Mammary epithelial cell (primary cell): ENCODE measurements at regions of chr19 and their contacts with region 1.

Region 1: GRCh38 chr19:31432201-31432810 is 83.1 kb upstream of the TSHZ3 start:
- DNase-seq: no peak
- H3K4me3 ChIP-seq: no peak overlapping the region
- H3K27ac ChIP-seq: no peak overlapping the region
- H3K4me1 ChIP-seq: no peaks in the 10 kb centered on the region
- H3K27me3 ChIP-seq: no peaks in the 10 kb centered on the region
- CTCF ChIP-seq: no peak

Region 2: GRCh38 chr19:31364963-31365362 is 67.3 kb before region 1 on chr19:
- CTCF ChIA-PET with region 1: no interaction called
- dilution Hi-C with region 1: no loop called
- in situ Hi-C with region 1: no loop called
- intact Hi-C with region 1: no loop called
- DNase-seq: no peak
- H3K4me3 ChIP-seq: no peak overlapping the region
- H3K27ac ChIP-seq: no peak overlapping the region
- H3K4me1 ChIP-seq: no peaks in the 10 kb centered on the region
- H3K27me3 ChIP-seq: no peaks in the 10 kb centered on the region
- CTCF ChIP-seq: no peak

Region 3: GRCh38 chr19:31397308-31397707 is 35.0 kb before region 1 on chr19:
- CTCF ChIA-PET with region 1: no interaction called
- dilution Hi-C with region 1: loop called (anchors 5 kb)
- in situ Hi-C with region 1: no loop called
- intact Hi-C with region 1: no loop called
- DNase-seq: no peak
- H3K4me3 ChIP-seq: no peak overlapping the region
- H3K27ac ChIP-seq: no peak overlapping the region
- H3K4me1 ChIP-seq: no peaks in the 10 kb centered on the region
- H3K27me3 ChIP-seq: peaks cover 2% of the 10 kb centered on the region
- CTCF ChIP-seq: no peak

Region 4: DNA sequence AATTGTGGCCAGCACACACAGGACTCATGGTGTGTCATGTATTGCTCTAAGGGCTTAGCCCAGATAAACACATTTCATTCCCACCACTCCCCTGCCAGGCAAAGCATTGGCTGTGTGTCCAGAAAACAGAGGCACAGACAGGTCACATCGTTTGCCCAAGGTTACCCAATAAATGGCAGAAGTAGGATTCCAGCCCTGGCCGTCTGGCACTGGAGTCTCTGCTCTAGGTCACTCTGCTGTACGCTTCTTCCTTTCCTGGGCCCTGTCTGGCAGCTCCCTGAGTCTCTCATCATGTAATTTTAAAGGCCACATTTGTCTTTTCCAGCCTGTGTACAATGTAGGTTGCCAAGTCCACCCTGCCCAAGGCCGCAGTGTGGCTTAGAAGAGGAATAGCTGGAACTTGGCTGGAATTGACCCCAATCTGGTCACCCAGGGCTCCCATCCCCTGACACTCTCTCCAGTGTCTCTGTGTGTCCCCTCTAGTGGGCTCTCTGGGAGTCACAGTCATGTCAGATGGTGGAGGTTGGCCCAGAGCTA is 181.4 kb after region 1 on chr19:
- CTCF ChIA-PET with region 1: no interaction called
- dilution Hi-C with region 1: no loop called
- in situ Hi-C with region 1: no loop called
- intact Hi-C with region 1: no loop called
- DNase-seq: peak; percentile 28
- H3K4me3 ChIP-seq: no peak overlapping the region
- H3K27ac ChIP-seq: no peak overlapping the region
- H3K4me1 ChIP-seq: no peaks in the 10 kb centered on the region
- H3K27me3 ChIP-seq: no peaks in the 10 kb centered on the region
- CTCF ChIP-seq: no peak